ENCODE measurements at regions of chr18 and their contacts with region 1.

Region 1: GRCh38 chr18:76982841-76983587 is 149.6 kb downstream of the MBP start:
- DNase-seq: peak; percentile 89
- ATAC-seq: peak; percentile 62
- H3K4me3 ChIP-seq: no peak overlapping the region
- H3K4me3 Mint-ChIP-seq: peak overlapping the region; percentile 77
- H3K27ac ChIP-seq: peak overlapping the region in 1 of 2 donors; percentile 9
- H3K27ac Mint-ChIP-seq: peak overlapping the region; percentile 90
- H3K4me1 ChIP-seq: peaks cover 51 to 57% of the 10 kb centered on the region in 2 donors
- H3K4me1 Mint-ChIP-seq: peaks cover 55% of the 10 kb centered on the region
- H3K27me3 ChIP-seq: no peaks in the 10 kb centered on the region
- H3K27me3 Mint-ChIP-seq: no peaks in the 10 kb centered on the region
- CTCF ChIP-seq: peak; percentile 90

Region 2: GRCh38 chr18:76492669-76493212 is 490.3 kb before region 1 on chr18:
- CTCF ChIA-PET with region 1: no interaction called
- POLR2A ChIA-PET with region 1: no interaction called
- intact Hi-C with region 1: no loop called
- DNase-seq: peak; percentile 99
- ATAC-seq: peak; percentile 74
- H3K4me3 ChIP-seq: peak overlapping the region; percentile 62 to 97 (median 77)
- H3K4me3 Mint-ChIP-seq: peak overlapping the region; percentile 95
- H3K27ac ChIP-seq: peak overlapping the region; percentile 67 to 69
- H3K27ac Mint-ChIP-seq: peak overlapping the region; percentile 94
- H3K4me1 ChIP-seq: peaks cover 18 to 40% of the 10 kb centered on the region in 2 donors
- H3K4me1 Mint-ChIP-seq: peaks cover 56% of the 10 kb centered on the region
- H3K27me3 ChIP-seq: peaks cover 0 to 10% (median 3%) of the 10 kb centered on the region in 4 experiments
- H3K27me3 Mint-ChIP-seq: peaks cover 21% of the 10 kb centered on the region
- CTCF ChIP-seq: no peak

Region 3: DNA sequence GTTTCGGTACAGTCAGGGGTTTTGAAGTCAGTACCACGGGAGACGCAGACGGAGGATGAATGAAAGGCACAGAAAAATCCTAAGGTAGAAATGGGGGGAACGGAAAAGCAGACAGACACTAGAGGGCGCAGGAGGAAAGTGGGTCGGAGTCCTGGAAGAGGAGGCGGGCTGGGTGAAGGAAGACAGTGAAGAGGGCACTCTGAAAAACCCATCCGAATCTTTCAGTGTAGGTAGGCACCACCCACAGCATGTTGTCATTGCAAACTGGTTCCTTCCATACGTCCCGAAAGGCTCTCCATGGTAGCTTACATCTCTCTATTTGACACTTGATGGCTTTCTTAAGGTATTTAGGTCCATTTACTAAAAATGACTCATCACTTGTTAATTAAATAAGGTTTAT is 179.2 kb before region 1 on chr18:
- CTCF ChIA-PET with region 1: interaction called, 30 read pairs
- POLR2A ChIA-PET with region 1: no interaction called
- intact Hi-C with region 1: loop called (anchors 1 kb)
- DNase-seq: peak; percentile 76
- ATAC-seq: peak; percentile 66
- H3K4me3 ChIP-seq: no peak overlapping the region
- H3K4me3 Mint-ChIP-seq: peak overlapping the region; percentile 56
- H3K27ac ChIP-seq: no peak overlapping the region
- H3K27ac Mint-ChIP-seq: no peak overlapping the region
- H3K4me1 ChIP-seq: peaks cover 15 to 19% of the 10 kb centered on the region in 2 donors
- H3K4me1 Mint-ChIP-seq: peaks cover 13% of the 10 kb centered on the region
- H3K27me3 ChIP-seq: peaks cover 0 to 9% (median 2%) of the 10 kb centered on the region in 4 experiments
- H3K27me3 Mint-ChIP-seq: peaks cover 5% of the 10 kb centered on the region
- CTCF ChIP-seq: peak; percentile 90

Region 4: GRCh38 chr18:76937597-76937996 is 45.4 kb before region 1 on chr18:
- CTCF ChIA-PET with region 1: interaction called, 69 read pairs
- POLR2A ChIA-PET with region 1: no interaction called
- intact Hi-C with region 1: no loop called
- DNase-seq: no peak
- ATAC-seq: no peak
- H3K4me3 ChIP-seq: no peak overlapping the region
- H3K4me3 Mint-ChIP-seq: no peak overlapping the region
- H3K27ac ChIP-seq: no peak overlapping the region
- H3K27ac Mint-ChIP-seq: no peak overlapping the region
- H3K4me1 ChIP-seq: no peaks in the 10 kb centered on the region
- H3K4me1 Mint-ChIP-seq: peaks cover 4% of the 10 kb centered on the region
- H3K27me3 ChIP-seq: no peaks in the 10 kb centered on the region
- H3K27me3 Mint-ChIP-seq: no peaks in the 10 kb centered on the region
- CTCF ChIP-seq: no peak

Region 5: GRCh38 chr18:76958692-76959341 is 24.2 kb before region 1 on chr18:
- CTCF ChIA-PET with region 1: interaction called, 287 read pairs
- POLR2A ChIA-PET with region 1: interaction called, 17 read pairs
- intact Hi-C with region 1: no loop called
- DNase-seq: no peak
- ATAC-seq: no peak
- H3K4me3 ChIP-seq: no peak overlapping the region
- H3K4me3 Mint-ChIP-seq: no peak overlapping the region
- H3K27ac ChIP-seq: no peak overlapping the region
- H3K27ac Mint-ChIP-seq: peak overlapping the region; percentile 32
- H3K4me1 ChIP-seq: peaks cover 25 to 27% of the 10 kb centered on the region in 2 donors
- H3K4me1 Mint-ChIP-seq: peaks cover 33% of the 10 kb centered on the region
- H3K27me3 ChIP-seq: no peaks in the 10 kb centered on the region
- H3K27me3 Mint-ChIP-seq: no peaks in the 10 kb centered on the region
- CTCF ChIP-seq: no peak

Region 6: DNA sequence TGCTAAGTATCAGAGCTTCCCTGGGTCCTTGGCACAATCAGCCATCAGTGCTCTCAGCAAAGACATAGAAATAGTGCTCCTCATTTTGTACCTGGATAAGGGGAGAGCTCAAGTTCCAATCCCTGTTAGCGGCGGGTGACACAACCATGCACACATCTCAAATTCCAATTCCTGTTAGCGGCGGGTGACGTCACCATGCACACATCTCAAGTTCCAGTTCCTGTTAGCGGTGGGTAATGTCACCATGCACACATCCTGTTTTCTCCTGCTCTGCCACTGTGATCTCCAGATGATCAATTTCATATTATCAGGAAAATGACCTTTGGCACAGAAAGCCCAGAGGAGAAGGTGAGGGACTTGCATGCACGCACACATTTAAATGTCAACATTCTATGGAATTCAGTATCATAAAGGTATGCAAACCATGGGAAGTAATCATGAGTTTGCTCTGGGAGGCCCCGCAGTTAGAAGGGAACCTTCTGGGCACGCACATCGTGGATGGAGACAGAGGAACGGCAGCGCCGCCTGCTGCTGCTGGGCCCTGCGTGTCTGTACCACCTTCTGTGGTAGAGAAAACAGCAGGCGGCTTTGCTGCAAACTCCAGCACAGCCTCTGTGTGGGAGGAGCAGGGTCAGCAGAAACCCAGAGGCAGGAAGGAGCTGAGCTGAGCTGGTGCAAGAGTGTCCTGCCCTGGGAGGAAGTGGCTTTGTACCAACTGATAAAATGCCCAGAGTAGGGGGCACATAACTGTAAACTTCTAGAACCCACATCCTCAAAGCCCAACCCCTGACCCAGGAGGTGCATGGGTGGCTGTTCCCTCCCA is 71.8 kb after region 1 on chr18:
- CTCF ChIA-PET with region 1: interaction called, 26 read pairs
- POLR2A ChIA-PET with region 1: interaction called, 3 read pairs
- intact Hi-C with region 1: loop called (anchors 1 kb)
- DNase-seq: peak; percentile 91
- ATAC-seq: peak; percentile 69
- H3K4me3 ChIP-seq: peak overlapping the region; percentile 32 to 41 (median 38)
- H3K4me3 Mint-ChIP-seq: peak overlapping the region; percentile 89
- H3K27ac ChIP-seq: peak overlapping the region; percentile 92 to 96
- H3K27ac Mint-ChIP-seq: peak overlapping the region; percentile 96
- H3K4me1 ChIP-seq: peaks cover 56 to 61% of the 10 kb centered on the region in 2 donors
- H3K4me1 Mint-ChIP-seq: peaks cover 68% of the 10 kb centered on the region
- H3K27me3 ChIP-seq: no peaks in the 10 kb centered on the region
- H3K27me3 Mint-ChIP-seq: no peaks in the 10 kb centered on the region
- CTCF ChIP-seq: peak; percentile 64

Region 7: DNA sequence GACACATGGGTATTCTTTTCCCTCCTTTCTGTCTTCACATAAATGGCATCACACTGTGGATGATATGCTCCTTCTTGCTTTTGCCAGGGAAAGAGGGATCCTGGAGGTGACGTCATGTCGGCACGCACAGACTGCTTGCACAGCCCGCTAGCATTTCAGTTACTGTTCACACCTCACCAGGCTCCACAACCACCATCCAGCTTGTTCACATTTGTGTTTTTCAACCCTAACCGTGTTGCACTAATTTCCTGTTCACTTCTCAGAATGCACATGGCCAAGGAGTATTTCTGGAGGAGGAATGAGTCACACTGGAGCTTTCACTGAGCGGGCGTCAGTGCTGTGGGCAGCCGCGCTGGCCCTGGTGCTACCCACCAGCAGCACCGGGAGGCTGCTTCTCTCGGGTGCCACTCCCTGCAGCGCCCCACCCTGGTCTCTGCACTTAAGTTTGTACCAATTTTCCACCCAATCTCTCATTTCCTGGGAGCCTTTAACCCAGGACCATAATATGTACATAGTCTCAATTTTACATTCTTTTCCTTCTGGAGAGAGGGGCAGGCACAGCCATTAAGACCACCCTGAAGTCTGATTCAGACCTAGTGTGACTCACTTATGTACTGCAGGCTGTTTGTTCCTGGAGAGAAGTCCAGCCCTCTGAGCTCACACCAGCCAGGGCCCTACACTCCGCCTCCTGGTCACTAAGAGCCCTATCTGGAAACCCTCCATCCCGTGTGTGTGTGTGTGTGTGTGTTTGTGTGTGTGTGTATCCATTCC is 84.5 kb after region 1 on chr18:
- CTCF ChIA-PET with region 1: interaction called, 23 read pairs
- POLR2A ChIA-PET with region 1: no interaction called
- intact Hi-C with region 1: loop called (anchors 2 kb)
- DNase-seq: peak; percentile 48
- ATAC-seq: peak; percentile 24
- H3K4me3 ChIP-seq: peak overlapping the region in 1 of 5 experiments; percentile 49
- H3K4me3 Mint-ChIP-seq: peak overlapping the region; percentile 82
- H3K27ac ChIP-seq: peak overlapping the region; percentile 77 to 97
- H3K27ac Mint-ChIP-seq: peak overlapping the region; percentile 98
- H3K4me1 ChIP-seq: peaks cover 72 to 84% of the 10 kb centered on the region in 2 donors
- H3K4me1 Mint-ChIP-seq: peaks cover 99% of the 10 kb centered on the region
- H3K27me3 ChIP-seq: no peaks in the 10 kb centered on the region
- H3K27me3 Mint-ChIP-seq: no peaks in the 10 kb centered on the region
- CTCF ChIP-seq: no peak